MCF 10A (cell line): ENCODE measurements at regions of chr6 and their contacts with region 1.

Region 1: DNA sequence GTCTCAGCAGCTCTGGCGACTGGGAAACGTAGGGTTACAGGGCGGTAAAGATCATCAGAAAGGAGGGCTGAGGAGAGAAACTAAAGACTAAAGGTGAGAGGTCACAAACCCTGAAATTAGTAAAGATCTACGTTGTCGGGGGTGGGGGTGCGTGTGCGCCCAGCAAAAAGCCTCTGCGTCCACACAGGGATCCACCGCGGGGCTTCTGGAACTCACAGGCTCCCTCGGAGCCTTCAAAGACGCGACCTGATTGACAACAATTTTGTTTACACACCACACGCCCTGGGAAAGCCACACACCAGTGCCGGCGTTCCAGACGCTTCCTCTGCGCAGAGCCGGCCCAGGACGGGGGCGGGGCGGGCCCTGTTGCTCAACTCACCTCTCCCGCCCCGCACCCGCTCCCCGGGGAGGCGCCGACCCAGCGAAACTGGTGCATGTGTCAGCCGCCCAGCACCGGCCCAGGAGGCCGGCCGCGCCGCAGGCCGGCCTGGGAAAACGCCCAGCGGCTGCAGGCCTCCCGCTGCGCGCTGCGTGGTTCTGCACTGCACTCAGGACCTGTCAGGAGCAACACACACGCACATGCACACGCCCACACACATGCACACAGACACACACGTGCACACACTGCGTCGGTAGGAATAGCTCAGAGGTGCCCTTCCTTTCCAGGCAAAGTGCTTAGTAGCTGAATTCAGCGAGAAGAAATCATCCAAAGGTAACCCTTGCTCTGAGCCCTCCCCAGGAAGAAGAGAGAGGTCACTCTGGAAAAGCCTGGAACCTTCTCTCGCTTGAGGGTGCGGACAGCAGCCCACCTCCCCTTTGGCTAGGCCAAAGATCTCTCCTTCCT is 57.2 kb upstream of the ARID1B start:
- DNase-seq: peak; percentile 97
- H3K4me3 Mint-ChIP-seq: peak overlapping the region; percentile 68
- H3K27ac Mint-ChIP-seq: peak overlapping the region; percentile 97
- H3K4me1 Mint-ChIP-seq: peaks cover 22% of the 10 kb centered on the region
- H3K27me3 Mint-ChIP-seq: no peaks in the 10 kb centered on the region
- CTCF ChIP-seq: no peak

Region 2: GRCh38 chr6:155314092-155314772 is 1405.7 kb before region 1 on chr6 and contains the start of gene TFB1M:
- CTCF ChIA-PET with region 1: no interaction called
- POLR2A ChIA-PET with region 1: interaction called, 10 read pairs
- intact Hi-C with region 1: no loop called
- DNase-seq: peak; percentile 98
- H3K4me3 Mint-ChIP-seq: peak within 1 kb of the TSS; percentile 79
- H3K27ac Mint-ChIP-seq: peak within 1 kb of the TSS; percentile 97
- H3K4me1 Mint-ChIP-seq: peaks cover 8% of the 10 kb centered on the region
- H3K27me3 Mint-ChIP-seq: no peaks in the 10 kb centered on the region
- CTCF ChIP-seq: no peak
- total RNA-seq, gene TFB1M: 26.8 and 31.0 TPM in 2 replicates

Region 3: DNA sequence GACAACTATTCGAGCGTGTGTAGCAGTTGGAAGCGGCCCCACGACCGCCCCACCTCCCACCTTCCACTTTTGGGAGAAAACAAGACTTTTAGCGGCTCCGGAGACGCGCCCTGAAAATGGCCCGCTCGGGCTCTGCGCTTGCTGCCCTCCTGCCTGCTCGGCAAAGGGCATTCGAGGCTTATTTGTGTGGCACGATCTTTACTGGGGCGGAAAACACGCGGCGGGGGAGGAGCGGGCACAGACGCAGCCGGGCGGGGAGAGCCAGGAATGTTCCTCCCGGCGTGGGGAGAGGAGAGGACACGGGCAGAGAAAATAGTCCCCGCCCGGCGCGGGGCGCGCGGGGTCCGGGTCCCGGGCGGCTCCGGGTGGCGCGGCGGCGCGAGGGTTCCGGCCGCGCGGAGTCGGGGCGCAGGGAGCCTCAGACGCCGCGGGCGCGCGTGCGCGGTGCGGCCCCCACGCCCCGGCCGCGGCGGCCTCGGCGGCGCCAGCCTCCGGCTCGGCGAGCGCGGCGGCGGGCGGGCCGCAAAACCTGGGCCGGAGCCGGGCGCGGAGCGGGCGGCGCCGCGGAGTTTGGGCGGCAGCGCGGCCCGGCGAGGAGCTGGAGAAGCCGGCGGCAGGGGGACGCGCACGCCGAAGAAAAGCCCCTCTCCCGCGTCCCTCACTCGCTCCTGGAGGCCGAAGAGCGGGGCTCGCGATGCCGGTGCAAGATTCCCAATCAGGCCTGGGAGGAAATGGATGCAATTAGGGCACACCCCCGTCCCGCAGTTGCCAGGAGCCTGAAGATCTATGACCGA is 32.8 kb before region 1 on chr6:
- CTCF ChIA-PET with region 1: interaction called, 6 read pairs
- POLR2A ChIA-PET with region 1: interaction called, 71 read pairs
- intact Hi-C with region 1: loop called (anchors 1 kb)
- DNase-seq: peak; percentile 70
- H3K4me3 Mint-ChIP-seq: peak overlapping the region; percentile 74
- H3K27ac Mint-ChIP-seq: peak overlapping the region; percentile 61
- H3K4me1 Mint-ChIP-seq: peaks cover 8% of the 10 kb centered on the region
- H3K27me3 Mint-ChIP-seq: no peaks in the 10 kb centered on the region
- CTCF ChIP-seq: no peak

Region 4: DNA sequence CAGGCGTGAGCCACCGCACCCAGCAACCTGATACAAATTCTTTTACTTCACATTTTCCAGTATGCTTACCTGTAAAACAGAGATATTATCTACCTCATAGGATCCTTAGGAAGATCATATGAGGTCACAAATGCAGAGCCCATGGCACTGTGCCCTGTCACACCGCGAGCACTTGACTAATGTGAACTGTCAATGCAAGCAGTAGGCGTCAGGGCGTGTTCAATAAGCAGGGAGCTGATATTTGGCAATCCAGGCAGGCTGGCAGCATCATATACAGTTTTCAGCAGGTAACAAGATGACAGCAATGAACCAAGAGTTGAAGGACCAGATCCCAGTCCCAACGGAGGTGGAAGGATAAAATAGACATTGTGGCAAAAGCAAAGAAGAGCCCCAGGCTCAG is 42.6 kb after region 1 on chr6:
- CTCF ChIA-PET with region 1: interaction called, 3 read pairs
- POLR2A ChIA-PET with region 1: interaction called, 14 read pairs
- intact Hi-C with region 1: no loop called
- DNase-seq: peak; percentile 5
- H3K4me3 Mint-ChIP-seq: no peak overlapping the region
- H3K27ac Mint-ChIP-seq: no peak overlapping the region
- H3K4me1 Mint-ChIP-seq: no peaks in the 10 kb centered on the region
- H3K27me3 Mint-ChIP-seq: no peaks in the 10 kb centered on the region
- CTCF ChIP-seq: no peak

Region 5: GRCh38 chr6:156781861-156782631 is 62.1 kb after region 1 on chr6:
- CTCF ChIA-PET with region 1: interaction called, 7 read pairs
- POLR2A ChIA-PET with region 1: interaction called, 196 read pairs
- intact Hi-C with region 1: loop called (anchors 1 kb)
- DNase-seq: peak; percentile 16
- H3K4me3 Mint-ChIP-seq: peak overlapping the region; percentile 79
- H3K27ac Mint-ChIP-seq: peak overlapping the region; percentile 97
- H3K4me1 Mint-ChIP-seq: peaks cover 13% of the 10 kb centered on the region
- H3K27me3 Mint-ChIP-seq: no peaks in the 10 kb centered on the region
- CTCF ChIP-seq: no peak

Region 6: GRCh38 chr6:157021344-157021992 is 301.5 kb after region 1 on chr6:
- CTCF ChIA-PET with region 1: no interaction called
- POLR2A ChIA-PET with region 1: interaction called, 64 read pairs
- intact Hi-C with region 1: no loop called
- DNase-seq: peak; percentile 88
- H3K4me3 Mint-ChIP-seq: peak overlapping the region; percentile 90
- H3K27ac Mint-ChIP-seq: peak overlapping the region; percentile 99
- H3K4me1 Mint-ChIP-seq: peaks cover 10% of the 10 kb centered on the region
- H3K27me3 Mint-ChIP-seq: no peaks in the 10 kb centered on the region
- CTCF ChIP-seq: peak; percentile 46